H1 (cell line): ENCODE measurements at regions of chr5 and their contacts with region 1.

Region 1: DNA sequence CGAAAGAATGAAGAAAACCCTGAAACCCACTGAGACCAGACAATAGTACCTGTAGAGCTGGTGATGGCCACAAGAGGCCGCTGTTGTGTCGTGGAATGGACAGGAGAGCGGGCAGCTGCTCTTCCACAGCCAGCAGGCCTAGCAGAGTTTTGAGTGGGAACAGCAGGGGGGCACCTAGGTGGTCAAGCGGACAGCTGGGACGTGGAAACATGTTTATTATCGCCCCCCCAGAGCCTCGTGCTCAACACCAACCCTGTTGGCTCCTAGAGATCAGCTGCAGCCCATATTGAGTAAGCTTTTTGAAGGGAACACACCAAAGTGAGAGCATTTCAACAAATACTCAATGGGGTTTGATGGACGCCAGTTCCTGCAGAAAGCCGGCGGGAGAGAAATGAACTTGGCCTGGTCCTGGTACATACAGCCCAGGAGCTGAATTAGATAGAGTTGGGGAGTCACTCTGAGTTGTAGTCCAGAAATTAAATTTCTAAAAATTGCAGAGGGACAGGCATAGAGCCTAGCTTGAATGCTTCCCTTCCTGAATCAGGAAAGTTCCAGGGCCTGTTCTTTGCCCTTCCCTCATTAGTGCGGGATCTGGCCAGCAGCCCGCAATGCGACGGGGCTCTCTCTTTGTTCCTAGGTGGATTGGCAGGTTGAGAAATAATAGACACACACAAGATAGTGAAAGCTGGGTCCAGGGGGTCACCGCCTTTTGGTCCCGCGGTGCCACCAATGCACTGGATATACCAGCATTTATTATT is 33.8 kb downstream of the MFAP3 start:
- DNase-seq: peak; percentile 19 to 93
- H3K4me3 ChIP-seq: no peak overlapping the region
- H3K27ac ChIP-seq: no peak overlapping the region
- H3K4me1 ChIP-seq: peaks cover 0 to 6% (median 0%) of the 10 kb centered on the region in 4 experiments; a peak in 2 of 7 replicates
- H3K27me3 ChIP-seq: no peaks in the 10 kb centered on the region
- CTCF ChIP-seq: peak; percentile 83 to 96 (median 91)
- EP300 ChIP-seq: no peak
- POLR2A ChIP-seq: no peak
- RAD21 ChIP-seq: peak; percentile 100

Region 2: DNA sequence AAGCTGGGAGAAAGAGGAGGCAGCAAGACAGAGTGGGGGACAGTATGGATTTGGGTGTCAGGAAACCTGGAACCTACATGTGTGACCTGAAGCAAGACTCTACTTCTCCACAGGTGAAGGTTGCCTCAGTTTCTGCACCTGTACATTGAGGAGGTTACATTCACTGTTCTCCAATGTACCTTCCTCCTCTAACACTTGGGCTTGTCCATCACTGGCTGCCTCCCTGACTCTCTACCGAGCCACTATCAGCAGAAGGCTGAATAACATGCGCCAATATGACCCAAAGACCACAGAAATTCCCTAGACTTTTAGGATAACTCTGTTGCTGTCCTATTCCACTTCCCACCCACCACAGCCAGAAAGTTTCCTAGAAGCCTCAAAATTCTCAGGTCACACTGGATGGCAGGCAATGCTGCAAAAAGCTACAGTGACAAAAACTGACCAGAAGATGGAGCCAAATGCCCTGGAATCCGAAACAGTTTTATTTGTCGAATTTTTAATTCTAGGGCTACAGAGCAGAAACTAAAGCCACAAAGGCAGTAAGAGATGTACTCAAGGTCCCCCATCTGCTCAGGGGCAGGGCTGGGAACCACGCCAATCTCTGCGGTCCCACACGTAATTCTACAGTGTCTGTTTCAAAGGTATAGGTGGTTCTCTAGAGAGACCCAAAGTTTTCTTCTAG is 98.3 kb before region 1 on chr5:
- CTCF ChIA-PET with region 1: interaction called, 10 read pairs
- POLR2A ChIA-PET with region 1: no interaction called
- DNase-seq: peak in 1 of 2 experiments; percentile 60
- H3K4me3 ChIP-seq: no peak overlapping the region
- H3K27ac ChIP-seq: no peak overlapping the region
- H3K4me1 ChIP-seq: no peaks in the 10 kb centered on the region
- H3K27me3 ChIP-seq: peaks cover 0 to 2% (median 0%) of the 10 kb centered on the region in 4 experiments; a peak in 1 of 7 replicates
- CTCF ChIP-seq: peak in 2 of 3 experiments; percentile 71 to 74; a peak in 3 of 4 replicates
- EP300 ChIP-seq: no peak
- POLR2A ChIP-seq: no peak
- RAD21 ChIP-seq: peak; percentile 93 to 96

Region 3: DNA sequence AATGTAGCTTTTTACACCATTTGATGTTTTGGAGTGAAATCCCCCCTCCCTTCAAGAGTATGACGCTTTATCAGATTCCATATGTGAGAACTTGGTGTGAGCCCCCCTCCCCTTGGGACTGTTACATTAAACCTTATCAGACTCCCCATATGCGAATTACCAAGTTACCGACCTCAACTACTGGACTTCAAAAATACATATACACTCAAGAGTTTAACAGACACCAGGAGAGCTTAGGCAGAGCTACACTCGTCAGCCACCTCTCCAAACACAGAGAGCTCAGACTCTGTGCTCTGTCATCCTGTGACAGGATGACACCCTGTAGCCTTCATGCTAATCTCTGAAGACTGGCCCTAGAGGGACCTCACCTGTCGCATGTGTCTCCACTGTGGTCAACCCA is 84.1 kb before region 1 on chr5:
- CTCF ChIA-PET with region 1: no interaction called
- POLR2A ChIA-PET with region 1: no interaction called
- DNase-seq: no peak
- H3K4me3 ChIP-seq: no peak overlapping the region
- H3K27ac ChIP-seq: no peak overlapping the region
- H3K4me1 ChIP-seq: no peaks in the 10 kb centered on the region
- H3K27me3 ChIP-seq: no peaks in the 10 kb centered on the region
- CTCF ChIP-seq: no peak
- EP300 ChIP-seq: no peak
- POLR2A ChIP-seq: no peak
- RAD21 ChIP-seq: no peak

Region 4: GRCh38 chr5:154087257-154087656 is 14.7 kb after region 1 on chr5:
- CTCF ChIA-PET with region 1: interaction called, 23 read pairs
- POLR2A ChIA-PET with region 1: interaction called, 3 read pairs
- DNase-seq: no peak
- H3K4me3 ChIP-seq: no peak overlapping the region
- H3K27ac ChIP-seq: no peak overlapping the region
- H3K4me1 ChIP-seq: peaks cover 0 to 6% (median under 1%) of the 10 kb centered on the region in 4 experiments; a peak in 2 of 7 replicates
- H3K27me3 ChIP-seq: no peaks in the 10 kb centered on the region
- CTCF ChIP-seq: no peak
- EP300 ChIP-seq: no peak
- POLR2A ChIP-seq: no peak
- RAD21 ChIP-seq: no peak

Region 5: GRCh38 chr5:154146409-154146808 is 73.8 kb after region 1 on chr5:
- CTCF ChIA-PET with region 1: interaction called, 10 read pairs
- POLR2A ChIA-PET with region 1: no interaction called
- DNase-seq: no peak
- H3K4me3 ChIP-seq: no peak overlapping the region
- H3K27ac ChIP-seq: no peak overlapping the region
- H3K4me1 ChIP-seq: peaks cover 0 to 2% (median 0%) of the 10 kb centered on the region in 4 experiments; a peak in 2 of 7 replicates
- H3K27me3 ChIP-seq: no peaks in the 10 kb centered on the region
- CTCF ChIP-seq: no peak
- EP300 ChIP-seq: no peak
- POLR2A ChIP-seq: no peak
- RAD21 ChIP-seq: no peak

Region 6: GRCh38 chr5:154179846-154180710 is 107.5 kb after region 1 on chr5:
- CTCF ChIA-PET with region 1: interaction called, 211 read pairs
- POLR2A ChIA-PET with region 1: no interaction called
- DNase-seq: no peak
- H3K4me3 ChIP-seq: no peak overlapping the region
- H3K27ac ChIP-seq: no peak overlapping the region
- H3K4me1 ChIP-seq: no peaks in the 10 kb centered on the region; a peak in 1 of 7 replicates
- H3K27me3 ChIP-seq: peaks cover 0 to 3% (median 0%) of the 10 kb centered on the region in 4 experiments; a peak in 1 of 7 replicates
- CTCF ChIP-seq: peak; percentile 26 to 84 (median 84)
- EP300 ChIP-seq: no peak
- POLR2A ChIP-seq: no peak
- RAD21 ChIP-seq: peak; percentile 85 to 90

Region 7: DNA sequence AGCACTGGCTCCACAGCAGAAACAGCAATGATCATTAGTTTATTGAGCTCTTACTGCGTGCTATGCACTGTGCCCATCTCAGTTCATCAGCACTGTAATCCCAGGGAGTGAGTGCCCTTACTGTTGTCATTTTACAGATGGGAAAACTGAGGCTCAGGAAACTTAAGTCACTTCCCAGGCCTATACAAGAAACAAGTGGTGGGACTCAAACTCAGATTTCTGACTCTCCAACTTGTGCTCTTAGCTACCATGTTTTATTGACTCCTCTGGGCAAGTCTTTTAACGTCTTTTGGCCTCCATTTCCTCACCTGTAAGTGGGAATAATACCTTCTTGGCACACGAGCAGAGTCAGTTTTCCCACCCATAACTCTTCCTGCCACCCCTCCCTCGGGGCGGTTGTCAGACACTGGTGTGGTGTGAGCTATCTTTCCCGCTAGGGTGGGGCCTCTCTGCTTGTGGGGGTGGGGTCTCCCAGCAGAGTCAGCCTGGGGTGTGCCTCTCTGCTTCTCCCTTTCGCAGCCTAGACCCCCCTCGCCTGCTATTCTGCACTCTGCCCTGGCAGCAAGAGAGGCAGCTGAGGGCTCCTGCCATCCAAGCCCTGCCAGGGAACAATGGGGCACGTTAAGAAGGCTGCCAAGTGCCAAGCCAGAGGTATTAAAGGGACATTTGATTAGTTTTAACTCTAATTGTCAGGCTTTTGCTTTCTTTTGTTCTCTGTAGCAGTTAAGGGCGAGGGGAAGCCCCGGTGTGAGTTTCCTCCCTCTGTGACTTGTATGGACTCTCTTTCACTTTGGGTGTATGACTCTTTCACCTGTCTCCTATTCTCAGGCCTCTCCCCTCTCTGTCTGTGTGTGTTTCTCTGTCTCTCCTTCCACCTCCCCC is 130.0 kb after region 1 on chr5:
- CTCF ChIA-PET with region 1: interaction called, 37 read pairs
- POLR2A ChIA-PET with region 1: no interaction called
- DNase-seq: no peak
- H3K4me3 ChIP-seq: no peak overlapping the region
- H3K27ac ChIP-seq: no peak overlapping the region
- H3K4me1 ChIP-seq: peaks cover 0 to 6% (median 2%) of the 10 kb centered on the region in 4 experiments; a peak in 2 of 7 replicates
- H3K27me3 ChIP-seq: no peaks in the 10 kb centered on the region
- CTCF ChIP-seq: no peak
- EP300 ChIP-seq: no peak
- POLR2A ChIP-seq: no peak
- RAD21 ChIP-seq: no peak

Region 8: DNA sequence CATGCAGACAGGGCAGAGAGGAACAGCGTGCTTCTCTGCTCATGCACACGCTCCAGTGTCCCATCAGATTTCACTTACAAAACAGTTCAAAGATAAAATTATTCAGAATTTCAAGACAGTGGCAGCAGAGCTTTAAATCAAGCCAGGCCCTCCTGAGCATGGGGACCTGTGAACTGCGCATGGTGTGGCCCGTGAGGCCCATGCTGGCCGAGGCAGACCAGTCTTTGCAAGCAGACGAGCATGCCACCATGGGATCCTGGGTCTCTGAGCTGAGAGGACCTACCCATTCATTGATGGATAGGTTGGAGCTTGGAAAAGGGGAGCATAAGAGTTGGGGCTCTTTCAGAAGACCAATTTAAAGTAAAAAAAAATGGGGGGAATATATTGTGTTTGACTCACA is 338.2 kb after region 1 on chr5:
- CTCF ChIA-PET with region 1: interaction called, 61 read pairs
- POLR2A ChIA-PET with region 1: interaction called, 5 read pairs
- DNase-seq: no peak
- H3K4me3 ChIP-seq: no peak overlapping the region
- H3K27ac ChIP-seq: no peak overlapping the region
- H3K4me1 ChIP-seq: no peaks in the 10 kb centered on the region; a peak in 1 of 7 replicates
- H3K27me3 ChIP-seq: no peaks in the 10 kb centered on the region
- CTCF ChIP-seq: no peak
- EP300 ChIP-seq: no peak
- POLR2A ChIP-seq: no peak
- RAD21 ChIP-seq: no peak